ENCODE measurements at regions of chr10 and their contacts with region 1.

Region 1: DNA sequence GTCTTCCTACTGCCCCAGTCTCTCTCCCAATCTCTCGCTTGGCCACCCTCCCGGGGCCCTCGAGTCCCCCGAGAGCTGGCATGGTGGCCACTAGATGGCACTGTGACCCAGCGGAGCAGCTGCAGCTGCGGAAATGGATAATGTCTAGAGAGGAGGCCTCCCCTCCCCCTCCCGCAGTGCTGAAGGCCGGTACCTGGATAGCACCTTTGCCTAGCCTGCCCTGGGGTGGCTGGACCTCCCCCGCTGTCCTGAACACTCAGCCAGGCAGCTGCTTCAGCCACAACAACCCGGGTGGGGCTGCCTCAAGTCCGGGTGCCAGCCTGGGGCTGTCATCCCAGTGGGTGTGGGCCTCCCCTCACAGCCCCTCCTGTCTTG is 65.2 kb downstream of the GOLGA7B start:
- DNase-seq: peak; percentile 40 to 74 (median 61)
- ATAC-seq: peak; percentile 81
- H3K4me3 ChIP-seq: no peak overlapping the region
- H3K4me3 Mint-ChIP-seq: peak overlapping the region in 2 of 10 donors; percentile 19 to 62
- H3K27ac ChIP-seq: no peak overlapping the region
- H3K27ac Mint-ChIP-seq: no peak overlapping the region
- H3K4me1 ChIP-seq: peaks cover 2 to 5% of the 10 kb centered on the region in 2 donors
- H3K4me1 Mint-ChIP-seq: peaks cover 0 to 15% (median 7%) of the 10 kb centered on the region in 7 donors
- H3K27me3 ChIP-seq: no peaks in the 10 kb centered on the region
- H3K27me3 Mint-ChIP-seq: peaks cover 0 to 23% (median 5%) of the 10 kb centered on the region in 5 donors

Region 2: DNA sequence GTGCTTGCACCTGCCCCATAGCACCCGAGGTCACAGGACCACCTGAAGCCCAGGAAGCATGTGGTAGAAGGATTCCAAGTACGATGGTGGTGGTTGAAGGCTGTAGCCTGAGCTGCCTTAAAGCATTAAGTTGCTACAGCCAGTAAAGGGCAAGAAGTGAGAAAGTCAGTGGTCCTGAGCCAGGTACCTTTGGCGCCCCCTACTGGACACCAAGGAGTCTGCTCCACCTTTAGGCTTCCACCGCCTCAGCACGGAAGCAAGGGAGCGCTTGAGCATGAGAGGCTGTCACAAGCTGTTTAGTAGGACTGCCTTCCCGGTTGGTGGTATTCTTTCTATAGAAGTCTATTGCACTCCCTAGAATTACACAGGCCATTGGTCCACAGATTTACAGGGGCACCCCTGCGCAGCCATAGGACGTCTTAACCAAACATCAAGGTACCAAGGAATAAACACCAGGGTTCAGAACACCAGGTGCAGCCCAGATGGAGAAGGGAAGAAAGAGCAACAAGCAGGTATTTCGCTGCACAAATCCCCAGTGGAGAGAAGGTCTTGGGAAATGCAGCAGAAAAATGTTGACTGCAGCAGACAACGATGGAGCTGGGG is 113.4 kb after region 1 on chr10:
- CTCF ChIA-PET with region 1: interaction called, 6 read pairs
- POLR2A ChIA-PET with region 1: no interaction called
- intact Hi-C with region 1: loop called in 1 of 2 experiments (anchors 5 kb)
- DNase-seq: peak in 8 of 9 donors; percentile 18 to 58 (median 41)
- ATAC-seq: peak; percentile 78
- H3K4me3 ChIP-seq: no peak overlapping the region
- H3K4me3 Mint-ChIP-seq: peak overlapping the region in 5 of 10 donors; percentile 17 to 77 (median 55)
- H3K27ac ChIP-seq: no peak overlapping the region
- H3K27ac Mint-ChIP-seq: peak overlapping the region in 1 of 9 donors; percentile 5
- H3K4me1 ChIP-seq: peaks cover 0 to 4% of the 10 kb centered on the region in 2 donors
- H3K4me1 Mint-ChIP-seq: peaks cover 2 to 19% (median 12%) of the 10 kb centered on the region in 7 donors
- H3K27me3 ChIP-seq: peaks cover 8 to 13% of the 10 kb centered on the region in 2 donors
- H3K27me3 Mint-ChIP-seq: peaks cover 57 to 65% (median 62%) of the 10 kb centered on the region in 5 donors

Region 3: GRCh38 chr10:98045785-98046389 is 131.1 kb after region 1 on chr10:
- CTCF ChIA-PET with region 1: interaction called, 32 read pairs
- POLR2A ChIA-PET with region 1: no interaction called
- intact Hi-C with region 1: loop called (anchors 1 kb)
- DNase-seq: peak; percentile 24 to 62 (median 53)
- ATAC-seq: peak; percentile 84
- H3K4me3 ChIP-seq: no peak overlapping the region
- H3K4me3 Mint-ChIP-seq: no peak overlapping the region
- H3K27ac ChIP-seq: no peak overlapping the region
- H3K27ac Mint-ChIP-seq: no peak overlapping the region
- H3K4me1 ChIP-seq: no peaks in the 10 kb centered on the region
- H3K4me1 Mint-ChIP-seq: peaks cover 0 to 6% (median 4%) of the 10 kb centered on the region in 7 donors
- H3K27me3 ChIP-seq: peaks cover 0 to 6% of the 10 kb centered on the region in 2 donors
- H3K27me3 Mint-ChIP-seq: peaks cover 29 to 41% (median 30%) of the 10 kb centered on the region in 5 donors

Region 4: DNA sequence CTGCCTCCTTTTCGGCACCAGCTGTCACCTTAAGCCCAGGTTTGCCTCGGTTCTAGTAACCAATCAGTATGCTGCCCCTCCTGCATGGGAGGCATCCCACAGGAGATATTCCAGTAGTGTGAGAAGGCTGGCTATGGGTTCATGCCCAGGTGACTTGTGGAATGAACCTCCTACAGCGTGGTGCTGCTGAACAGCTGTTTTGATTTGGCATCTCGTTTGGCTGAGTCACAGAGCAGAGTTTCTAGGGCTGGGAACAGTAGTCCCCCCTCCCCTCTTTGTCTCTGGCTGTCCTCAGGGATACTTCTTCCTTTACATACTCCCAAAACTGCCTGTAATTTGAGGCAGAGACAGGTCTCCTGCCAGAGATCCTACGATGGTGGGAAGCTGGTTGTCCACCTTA is 235.7 kb after region 1 on chr10:
- CTCF ChIA-PET with region 1: no interaction called
- POLR2A ChIA-PET with region 1: no interaction called
- intact Hi-C with region 1: no loop called
- DNase-seq: no peak
- ATAC-seq: no peak
- H3K4me3 ChIP-seq: no peak overlapping the region
- H3K4me3 Mint-ChIP-seq: peak overlapping the region in 1 of 10 donors; percentile 15
- H3K27ac ChIP-seq: no peak overlapping the region
- H3K27ac Mint-ChIP-seq: peak overlapping the region in 1 of 9 donors; percentile 10
- H3K4me1 ChIP-seq: no peaks in the 10 kb centered on the region
- H3K4me1 Mint-ChIP-seq: peaks cover 6 to 61% (median 51%) of the 10 kb centered on the region in 7 donors
- H3K27me3 ChIP-seq: no peaks in the 10 kb centered on the region
- H3K27me3 Mint-ChIP-seq: no peaks in the 10 kb centered on the region

Region 5: GRCh38 chr10:98309366-98310355 is 394.8 kb after region 1 on chr10:
- CTCF ChIA-PET with region 1: no interaction called
- POLR2A ChIA-PET with region 1: no interaction called
- intact Hi-C with region 1: loop called in 1 of 2 experiments (anchors 10 kb)
- DNase-seq: peak in 1 of 9 donors; percentile 29
- ATAC-seq: peak; percentile 60
- H3K4me3 ChIP-seq: no peak overlapping the region
- H3K4me3 Mint-ChIP-seq: no peak overlapping the region
- H3K27ac ChIP-seq: no peak overlapping the region
- H3K27ac Mint-ChIP-seq: no peak overlapping the region
- H3K4me1 ChIP-seq: no peaks in the 10 kb centered on the region
- H3K4me1 Mint-ChIP-seq: peaks cover 0 to 3% (median 0%) of the 10 kb centered on the region in 7 donors
- H3K27me3 ChIP-seq: no peaks in the 10 kb centered on the region
- H3K27me3 Mint-ChIP-seq: peaks cover 28 to 46% (median 35%) of the 10 kb centered on the region in 5 donors

Region 6: DNA sequence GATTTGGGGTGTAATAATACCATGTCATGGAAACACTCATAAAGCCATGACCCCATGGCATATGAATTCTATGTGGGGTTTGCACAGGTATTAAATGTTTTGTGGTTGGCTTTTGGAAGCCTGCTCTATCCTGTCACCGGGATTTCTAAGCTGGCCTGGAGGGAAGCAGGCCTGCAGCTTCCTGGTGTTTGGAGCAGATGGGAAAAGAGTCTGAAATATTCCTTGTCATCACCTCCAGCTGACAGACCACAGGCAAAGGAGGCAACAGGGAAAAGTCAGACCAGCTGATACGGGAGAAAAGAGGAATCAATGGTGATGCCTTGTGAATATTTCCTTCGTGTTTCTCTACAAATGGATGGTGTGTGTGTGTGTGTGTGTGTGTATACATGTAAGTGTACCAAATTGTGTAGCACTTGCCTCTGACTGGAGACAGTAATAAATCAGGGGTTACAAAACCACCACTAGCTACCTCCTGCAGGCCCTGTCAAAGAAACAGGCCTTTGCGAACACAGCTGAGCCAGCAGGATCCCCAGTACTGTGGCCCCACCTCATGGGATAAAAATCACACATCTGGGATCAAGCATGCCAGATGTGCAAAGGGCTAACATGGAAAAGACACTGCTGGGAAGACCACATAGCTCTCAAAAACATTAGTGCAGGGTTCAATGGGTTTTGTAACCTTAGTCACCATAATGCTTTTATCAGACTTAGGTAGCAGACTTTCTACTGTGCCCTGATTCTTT is 652.7 kb after region 1 on chr10:
- CTCF ChIA-PET with region 1: no interaction called
- POLR2A ChIA-PET with region 1: no interaction called
- intact Hi-C with region 1: no loop called
- DNase-seq: no peak
- ATAC-seq: no peak
- H3K4me3 ChIP-seq: no peak overlapping the region
- H3K4me3 Mint-ChIP-seq: no peak overlapping the region
- H3K27ac ChIP-seq: no peak overlapping the region
- H3K27ac Mint-ChIP-seq: no peak overlapping the region
- H3K4me1 ChIP-seq: no peaks in the 10 kb centered on the region
- H3K4me1 Mint-ChIP-seq: no peaks in the 10 kb centered on the region
- H3K27me3 ChIP-seq: no peaks in the 10 kb centered on the region
- H3K27me3 Mint-ChIP-seq: peaks cover 7 to 23% (median 18%) of the 10 kb centered on the region in 5 donors